Activated CD4-positive, alpha-beta T cell treated with anti-CD3 and anti-CD28 coated beads for 36 hours (primary cell): ENCODE measurements at regions of chr3 and their contacts with region 1.

Region 1: GRCh38 chr3:171566803-171567422 is 106.7 kb upstream of the TNIK start:
- DNase-seq: no peak
- ATAC-seq: peak; percentile 65
- H3K4me3 Mint-ChIP-seq: no peak overlapping the region
- H3K27ac Mint-ChIP-seq: no peak overlapping the region
- H3K4me1 Mint-ChIP-seq: peaks cover 18% of the 10 kb centered on the region
- H3K27me3 Mint-ChIP-seq: peaks cover 5% of the 10 kb centered on the region

Region 2: GRCh38 chr3:170961616-170962400 is 605.1 kb before region 1 on chr3:
- CTCF ChIA-PET with region 1: interaction called, 3 read pairs
- POLR2A ChIA-PET with region 1: no interaction called
- intact Hi-C with region 1: loop called (anchors 1 to 5 kb)
- DNase-seq: peak; percentile 7
- ATAC-seq: no peak
- H3K4me3 Mint-ChIP-seq: no peak overlapping the region
- H3K27ac Mint-ChIP-seq: no peak overlapping the region
- H3K4me1 Mint-ChIP-seq: no peaks in the 10 kb centered on the region
- H3K27me3 Mint-ChIP-seq: peaks cover 2% of the 10 kb centered on the region

Region 3: DNA sequence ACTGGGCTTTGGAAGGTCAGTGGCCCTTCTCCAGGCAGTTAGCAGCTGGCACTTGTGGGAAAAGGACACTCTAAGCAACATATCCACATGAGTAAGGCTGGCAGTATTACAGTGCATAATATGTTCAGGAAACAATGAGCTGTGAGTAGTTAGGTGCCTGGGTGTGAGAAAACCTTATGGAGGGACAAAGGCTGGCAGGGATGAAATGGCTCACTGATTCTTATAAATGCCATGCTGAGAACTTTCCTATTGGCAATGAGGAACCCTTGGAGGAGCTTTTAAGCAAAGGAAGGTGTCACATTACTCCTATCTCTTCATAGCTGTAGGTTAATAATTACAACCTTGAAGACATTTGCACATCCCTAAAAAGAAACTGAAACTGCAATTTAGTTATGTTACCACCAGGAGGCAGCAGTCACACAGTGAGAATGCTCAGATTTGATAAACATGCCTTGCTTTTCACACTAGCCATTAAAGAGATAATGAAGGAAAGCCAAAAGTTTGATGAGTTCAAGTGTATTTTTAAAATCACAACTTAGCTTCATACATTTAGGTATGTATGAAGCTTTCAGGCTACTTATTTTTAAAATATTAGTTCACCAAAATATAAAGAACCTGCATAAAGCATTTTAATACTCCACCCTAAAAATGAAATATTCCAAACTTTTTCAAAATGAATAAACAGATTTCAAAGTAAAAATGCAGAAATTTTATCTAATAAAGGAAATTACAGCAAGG is 403.8 kb before region 1 on chr3:
- CTCF ChIA-PET with region 1: interaction called, 22 read pairs
- POLR2A ChIA-PET with region 1: no interaction called
- intact Hi-C with region 1: loop called (anchors 1 kb)
- DNase-seq: peak; percentile 25
- ATAC-seq: no peak
- H3K4me3 Mint-ChIP-seq: no peak overlapping the region
- H3K27ac Mint-ChIP-seq: no peak overlapping the region
- H3K4me1 Mint-ChIP-seq: peaks cover 28% of the 10 kb centered on the region
- H3K27me3 Mint-ChIP-seq: no peaks in the 10 kb centered on the region

Region 4: DNA sequence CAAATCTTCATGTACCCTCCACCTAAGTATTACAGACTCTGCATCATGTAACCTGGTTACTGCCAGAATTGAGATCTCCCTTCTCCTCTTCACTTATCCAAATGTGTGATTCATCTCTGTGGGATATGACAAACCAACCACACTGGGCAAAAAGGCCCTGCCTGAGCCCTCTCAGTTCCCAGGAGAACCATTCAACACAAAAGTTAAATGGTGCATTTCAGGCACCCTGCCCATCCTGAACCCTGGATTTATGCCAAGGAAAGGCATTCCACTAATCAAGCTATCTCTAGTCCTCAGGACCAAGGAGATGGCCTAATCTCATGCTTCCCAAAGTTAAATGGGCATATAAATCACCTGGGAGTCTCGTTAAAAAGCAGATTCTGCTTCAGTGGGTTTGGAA is 215.2 kb before region 1 on chr3:
- CTCF ChIA-PET with region 1: no interaction called
- POLR2A ChIA-PET with region 1: no interaction called
- intact Hi-C with region 1: loop called in 1 of 2 experiments (anchors 10 kb)
- DNase-seq: no peak
- ATAC-seq: peak; percentile 51
- H3K4me3 Mint-ChIP-seq: no peak overlapping the region
- H3K27ac Mint-ChIP-seq: no peak overlapping the region
- H3K4me1 Mint-ChIP-seq: peaks cover 81% of the 10 kb centered on the region
- H3K27me3 Mint-ChIP-seq: no peaks in the 10 kb centered on the region

Region 5: DNA sequence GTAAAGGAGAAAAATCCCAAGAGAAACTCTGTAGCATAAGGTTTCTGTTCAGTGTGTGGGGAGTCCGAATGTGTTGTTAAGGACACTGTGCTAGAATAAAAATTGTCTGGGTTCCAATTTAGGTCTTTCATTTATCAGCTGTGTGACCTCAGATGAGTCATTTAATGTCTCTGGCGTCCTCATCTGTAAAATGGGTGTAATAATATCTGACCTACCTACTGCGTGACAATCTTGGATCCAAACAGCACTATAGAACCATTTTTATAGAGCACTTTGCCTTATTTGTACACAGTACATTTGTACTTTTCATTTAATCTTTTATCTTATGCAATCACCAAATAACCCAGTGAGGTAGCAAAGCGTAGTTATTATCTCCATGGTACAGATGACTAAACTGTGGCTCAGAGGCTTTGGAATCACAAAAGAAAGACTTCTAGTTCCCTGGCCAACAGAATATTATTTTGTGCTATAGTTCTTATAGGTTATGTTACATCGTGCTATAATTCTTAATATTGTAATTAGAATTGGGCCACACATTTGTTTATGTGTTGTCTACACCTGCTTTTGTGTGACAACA is 60.1 kb before region 1 on chr3:
- CTCF ChIA-PET with region 1: no interaction called
- POLR2A ChIA-PET with region 1: no interaction called
- intact Hi-C with region 1: no loop called
- DNase-seq: no peak
- ATAC-seq: no peak
- H3K4me3 Mint-ChIP-seq: no peak overlapping the region
- H3K27ac Mint-ChIP-seq: no peak overlapping the region
- H3K4me1 Mint-ChIP-seq: no peaks in the 10 kb centered on the region
- H3K27me3 Mint-ChIP-seq: no peaks in the 10 kb centered on the region

Region 6: GRCh38 chr3:171556148-171557145 is 10.5 kb before region 1 on chr3:
- CTCF ChIA-PET with region 1: interaction called, 12 read pairs
- POLR2A ChIA-PET with region 1: no interaction called
- intact Hi-C with region 1: no loop called
- DNase-seq: no peak
- ATAC-seq: no peak
- H3K4me3 Mint-ChIP-seq: no peak overlapping the region
- H3K27ac Mint-ChIP-seq: peak overlapping the region; percentile 30
- H3K4me1 Mint-ChIP-seq: peaks cover 19% of the 10 kb centered on the region
- H3K27me3 Mint-ChIP-seq: no peaks in the 10 kb centered on the region